H1 (cell line): ENCODE measurements at regions of chr6 and their contacts with region 1.

Region 1: GRCh38 chr6:85126485-85127167 is 323.3 kb upstream of the NT5E start:
- DNase-seq: peak; percentile 31 to 82
- H3K4me3 ChIP-seq: peak overlapping the region in 2 of 4 experiments; percentile 26 to 51; a peak in 5 of 8 replicates
- H3K27ac ChIP-seq: no peak overlapping the region
- H3K4me1 ChIP-seq: peaks cover 0 to 4% (median 2%) of the 10 kb centered on the region in 4 experiments; a peak in 3 of 7 replicates
- H3K27me3 ChIP-seq: peaks cover 0 to 1% (median 0%) of the 10 kb centered on the region in 4 experiments; a peak in 1 of 7 replicates
- CTCF ChIP-seq: peak; percentile 89 to 93 (median 93)
- EP300 ChIP-seq: no peak
- POLR2A ChIP-seq: peak in 1 of 2 experiments; percentile 62; a peak in 1 of 3 replicates
- RAD21 ChIP-seq: peak; percentile 90 to 93

Region 2: DNA sequence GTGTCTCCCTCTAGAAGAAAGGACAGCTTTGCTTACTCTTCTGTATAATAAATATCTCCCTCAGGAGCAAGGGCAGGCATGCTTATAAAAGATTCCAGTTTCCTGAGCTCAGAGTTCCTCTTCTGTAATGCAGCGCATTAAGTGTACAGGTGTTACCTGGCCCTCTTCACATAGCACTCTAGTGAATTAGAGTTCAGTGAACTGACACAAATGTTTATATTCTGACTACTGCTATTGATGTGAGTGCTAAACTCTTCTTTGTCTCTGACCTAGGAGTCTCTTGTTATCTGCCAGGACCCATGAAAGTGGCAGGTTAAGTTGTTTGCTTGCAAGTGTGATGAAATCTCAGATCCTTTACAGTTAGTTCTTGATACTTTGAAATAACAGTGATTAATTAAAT is 1233.6 kb before region 1 on chr6:
- CTCF ChIA-PET with region 1: no interaction called
- POLR2A ChIA-PET with region 1: no interaction called
- DNase-seq: no peak
- H3K4me3 ChIP-seq: no peak overlapping the region
- H3K27ac ChIP-seq: no peak overlapping the region
- H3K4me1 ChIP-seq: no peaks in the 10 kb centered on the region; a peak in 1 of 7 replicates
- H3K27me3 ChIP-seq: no peaks in the 10 kb centered on the region
- CTCF ChIP-seq: no peak
- EP300 ChIP-seq: no peak
- POLR2A ChIP-seq: no peak
- RAD21 ChIP-seq: no peak

Region 3: GRCh38 chr6:85113923-85114580 is 12.6 kb before region 1 on chr6:
- CTCF ChIA-PET with region 1: interaction called, 16 read pairs
- POLR2A ChIA-PET with region 1: no interaction called
- DNase-seq: no peak
- H3K4me3 ChIP-seq: no peak overlapping the region
- H3K27ac ChIP-seq: no peak overlapping the region
- H3K4me1 ChIP-seq: peaks cover 0 to 4% (median 0%) of the 10 kb centered on the region in 4 experiments; a peak in 1 of 7 replicates
- H3K27me3 ChIP-seq: no peaks in the 10 kb centered on the region
- CTCF ChIP-seq: no peak
- EP300 ChIP-seq: no peak
- POLR2A ChIP-seq: no peak
- RAD21 ChIP-seq: no peak

Region 4: DNA sequence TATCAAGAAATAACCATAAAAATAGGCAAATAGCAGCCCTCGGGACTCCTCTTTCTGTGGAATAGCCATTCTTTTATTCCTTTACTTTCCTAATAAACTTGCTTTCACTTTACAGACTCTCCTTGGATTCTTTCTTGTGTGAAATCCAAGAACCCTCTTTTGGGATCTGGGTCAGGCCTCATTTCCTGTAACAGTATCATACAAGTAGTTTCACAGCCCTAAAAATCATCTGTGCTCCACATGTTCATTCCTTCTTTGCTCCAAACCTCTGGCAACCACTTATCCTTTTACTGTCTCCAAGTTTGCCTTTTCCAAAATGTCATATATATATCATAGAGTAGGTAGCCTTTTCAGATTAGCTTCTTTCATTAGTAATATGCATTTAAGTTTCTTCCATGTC is 309.8 kb after region 1 on chr6:
- CTCF ChIA-PET with region 1: no interaction called
- POLR2A ChIA-PET with region 1: no interaction called
- DNase-seq: no peak
- H3K4me3 ChIP-seq: no peak overlapping the region
- H3K27ac ChIP-seq: no peak overlapping the region
- H3K4me1 ChIP-seq: no peaks in the 10 kb centered on the region
- H3K27me3 ChIP-seq: no peaks in the 10 kb centered on the region
- CTCF ChIP-seq: no peak
- EP300 ChIP-seq: no peak
- POLR2A ChIP-seq: no peak
- RAD21 ChIP-seq: no peak